Heart left ventricle (tissue), 16 donors: ENCODE measurements at regions of chr10 and their contacts with region 1.

Region 1: DNA sequence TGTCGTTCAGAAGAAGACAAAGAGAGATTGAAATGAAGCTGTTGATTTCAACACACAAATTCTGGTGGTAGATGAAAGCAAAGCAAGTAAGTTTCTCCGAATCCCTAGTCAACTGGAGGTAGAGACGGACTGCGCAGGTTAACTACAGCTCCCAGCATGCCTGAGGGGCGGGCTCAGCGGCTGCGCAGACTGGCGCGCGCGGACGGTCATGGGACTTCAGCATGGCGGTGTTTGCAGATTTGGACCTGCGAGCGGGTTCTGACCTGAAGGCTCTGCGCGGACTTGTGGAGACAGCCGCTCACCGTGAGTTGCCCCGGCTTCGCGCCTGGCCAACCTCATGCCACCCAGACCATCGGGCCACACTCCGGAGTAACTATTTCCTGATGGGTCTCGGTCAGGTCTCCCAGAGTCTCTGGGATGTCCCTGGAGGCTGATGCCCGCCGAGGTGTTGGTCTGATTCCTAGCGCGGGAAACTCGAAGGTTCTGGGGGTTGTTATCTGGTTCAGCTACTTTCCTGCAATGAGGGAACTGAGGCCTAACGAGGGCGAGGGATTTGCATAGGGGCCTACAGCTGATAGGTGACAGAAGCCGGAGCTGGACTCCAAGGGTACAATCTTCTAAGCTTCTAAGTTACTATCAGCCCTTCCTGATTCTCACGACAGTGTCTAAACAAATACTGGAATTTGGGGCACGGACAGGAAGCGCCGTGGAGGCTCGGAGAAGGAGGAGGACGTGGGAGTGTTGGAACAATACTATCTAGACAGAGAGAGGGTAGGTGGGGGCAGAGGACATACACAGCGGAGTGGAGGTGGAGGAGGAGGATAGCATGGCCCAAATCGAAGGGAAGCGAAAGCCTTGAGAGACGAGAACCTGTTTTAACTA is at the start of gene RPP30:
- DNase-seq: peak; percentile 83 to 92 (median 86)
- ATAC-seq: peak; percentile 97 to 99 (median 98)
- H3K4me3 ChIP-seq: peak within 1 kb of the TSS; percentile 66 to 98 (median 80)
- H3K27ac ChIP-seq: peak within 1 kb of the TSS; percentile 24 to 78 (median 64)
- H3K4me1 ChIP-seq: peaks cover 0 to 27% (median 14%) of the 10 kb centered on the region in 12 donors
- H3K27me3 ChIP-seq: no peaks in the 10 kb centered on the region
- CTCF ChIP-seq: no peak
- POLR2A ChIP-seq: peak in 1 of 2 donors; percentile 21
- total RNA-seq, gene RPP30: 26.4 to 39.9 (median 29.7) TPM

Region 2: GRCh38 chr10:90745563-90745962 is 126.4 kb before region 1 on chr10:
- intact Hi-C with region 1: loop called in 2 of 10 experiments (anchors 5 to 10 kb)
- DNase-seq: no peak
- ATAC-seq: no peak
- H3K4me3 ChIP-seq: no peak overlapping the region
- H3K27ac ChIP-seq: no peak overlapping the region
- H3K4me1 ChIP-seq: peaks cover 0 to 10% (median 0%) of the 10 kb centered on the region in 12 donors
- H3K27me3 ChIP-seq: peaks cover 0 to 4% (median 0%) of the 10 kb centered on the region in 9 donors
- CTCF ChIP-seq: no peak
- POLR2A ChIP-seq: no peak

Region 3: GRCh38 chr10:90993340-90993739 is 121.3 kb after region 1 on chr10:
- intact Hi-C with region 1: no loop called
- DNase-seq: no peak
- ATAC-seq: peak in 1 of 4 donors; percentile 39
- H3K4me3 ChIP-seq: no peak overlapping the region
- H3K27ac ChIP-seq: peak overlapping the region in 5 of 12 donors; percentile 3 to 58 (median 36)
- H3K4me1 ChIP-seq: peaks cover 0 to 15% (median 0%) of the 10 kb centered on the region in 12 donors
- H3K27me3 ChIP-seq: no peaks in the 10 kb centered on the region
- CTCF ChIP-seq: no peak
- POLR2A ChIP-seq: no peak